ENCODE measurements at regions of chr3 and their contacts with region 1.

Region 1: GRCh38 chr3:151168269-151169094 is 34.5 kb downstream of the GPR171 start:
- DNase-seq: peak; percentile 92
- ATAC-seq: peak; percentile 65
- H3K4me3 Mint-ChIP-seq: no peak overlapping the region
- H3K27ac Mint-ChIP-seq: peak overlapping the region; percentile 27
- H3K4me1 Mint-ChIP-seq: peaks cover 43% of the 10 kb centered on the region
- H3K27me3 Mint-ChIP-seq: no peaks in the 10 kb centered on the region
- CTCF ChIP-seq: peak; percentile 85

Region 2: DNA sequence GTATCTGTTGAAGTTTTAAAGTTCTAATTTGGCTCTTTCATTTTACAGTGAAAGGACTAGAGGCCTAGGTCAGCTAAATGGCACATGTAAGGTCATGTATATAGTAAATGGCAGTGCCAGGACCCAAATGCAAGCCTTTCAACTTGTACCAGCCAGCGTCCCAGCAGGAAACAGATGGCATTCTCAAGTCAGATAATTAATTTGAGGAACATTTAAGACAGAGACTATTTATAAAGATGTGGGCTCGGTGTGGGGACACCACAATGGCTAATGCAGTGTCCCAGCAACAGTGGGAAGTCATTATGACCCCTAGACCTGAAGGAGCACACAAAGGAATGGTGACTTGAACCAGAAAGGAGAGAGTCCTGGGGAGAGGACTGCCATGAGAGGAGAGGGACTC is 269.3 kb before region 1 on chr3:
- CTCF ChIA-PET with region 1: no interaction called
- POLR2A ChIA-PET with region 1: no interaction called
- intact Hi-C with region 1: no loop called
- DNase-seq: no peak
- ATAC-seq: no peak
- H3K4me3 Mint-ChIP-seq: no peak overlapping the region
- H3K27ac Mint-ChIP-seq: no peak overlapping the region
- H3K4me1 Mint-ChIP-seq: no peaks in the 10 kb centered on the region
- H3K27me3 Mint-ChIP-seq: peaks cover 2% of the 10 kb centered on the region
- CTCF ChIP-seq: no peak

Region 3: GRCh38 chr3:151146071-151146730 is 22.3 kb before region 1 on chr3:
- CTCF ChIA-PET with region 1: interaction called, 10 read pairs
- POLR2A ChIA-PET with region 1: no interaction called
- intact Hi-C with region 1: no loop called
- DNase-seq: peak; percentile 71
- ATAC-seq: peak; percentile 98
- H3K4me3 Mint-ChIP-seq: no peak overlapping the region
- H3K27ac Mint-ChIP-seq: no peak overlapping the region
- H3K4me1 Mint-ChIP-seq: no peaks in the 10 kb centered on the region
- H3K27me3 Mint-ChIP-seq: peaks cover 3% of the 10 kb centered on the region
- CTCF ChIP-seq: peak; percentile 98

Region 4: DNA sequence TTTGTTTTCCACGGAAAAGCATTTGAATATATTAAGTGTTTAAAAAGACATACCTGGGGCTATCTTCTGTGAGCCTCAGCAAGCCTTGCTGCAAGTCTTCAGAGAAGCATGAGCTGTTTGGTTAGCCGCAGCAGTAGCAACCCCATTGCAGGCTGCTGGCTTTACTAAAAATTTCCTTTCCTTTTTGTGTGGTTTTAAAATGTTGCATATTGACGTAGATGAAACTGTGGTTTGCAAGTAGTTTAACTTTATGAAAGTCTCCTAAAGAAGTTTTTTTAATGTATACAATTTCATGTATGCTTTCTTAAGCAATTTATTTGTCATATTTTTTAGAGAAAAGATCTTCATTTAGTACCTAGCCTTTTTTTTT is 34.6 kb after region 1 on chr3 and contains the start of gene GPR171:
- CTCF ChIA-PET with region 1: interaction called, 33 read pairs
- POLR2A ChIA-PET with region 1: interaction called, 49 read pairs
- intact Hi-C with region 1: loop called (anchors 2 kb)
- DNase-seq: peak; percentile 82
- ATAC-seq: peak; percentile 64
- H3K4me3 Mint-ChIP-seq: peak within 1 kb of the TSS; percentile 87
- H3K27ac Mint-ChIP-seq: peak within 1 kb of the TSS; percentile 96
- H3K4me1 Mint-ChIP-seq: peaks cover 54% of the 10 kb centered on the region
- H3K27me3 Mint-ChIP-seq: no peaks in the 10 kb centered on the region
- CTCF ChIP-seq: no peak
- total RNA-seq, gene GPR171: 91.8 to 101 TPM

Region 5: GRCh38 chr3:151219056-151219455 is 50.6 kb after region 1 on chr3:
- CTCF ChIA-PET with region 1: interaction called, 143 read pairs
- POLR2A ChIA-PET with region 1: interaction called, 3 read pairs
- intact Hi-C with region 1: no loop called
- DNase-seq: no peak
- ATAC-seq: peak; percentile 78
- H3K4me3 Mint-ChIP-seq: no peak overlapping the region
- H3K27ac Mint-ChIP-seq: no peak overlapping the region
- H3K4me1 Mint-ChIP-seq: peaks cover 13% of the 10 kb centered on the region
- H3K27me3 Mint-ChIP-seq: no peaks in the 10 kb centered on the region
- CTCF ChIP-seq: no peak

Region 6: DNA sequence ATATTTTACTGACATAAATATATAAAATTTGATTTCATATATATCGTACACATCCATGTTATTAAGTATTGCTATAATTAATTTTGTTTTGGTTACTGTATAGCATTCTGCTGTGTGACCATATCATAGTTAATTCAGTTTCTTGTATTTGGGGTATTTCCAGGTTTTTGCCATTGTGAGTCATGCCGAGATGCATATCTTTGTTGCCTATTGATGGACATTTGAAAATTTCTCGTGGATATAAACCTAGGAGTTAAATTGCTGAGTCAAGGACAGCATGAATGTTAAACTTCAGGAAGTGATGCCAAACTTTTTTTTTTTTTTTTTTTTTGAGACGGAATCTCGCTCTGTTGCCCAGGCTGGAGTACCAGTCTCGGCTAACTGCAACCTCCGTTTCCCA is 68.3 kb after region 1 on chr3:
- CTCF ChIA-PET with region 1: interaction called, 28 read pairs
- POLR2A ChIA-PET with region 1: no interaction called
- intact Hi-C with region 1: no loop called
- DNase-seq: no peak
- ATAC-seq: no peak
- H3K4me3 Mint-ChIP-seq: no peak overlapping the region
- H3K27ac Mint-ChIP-seq: no peak overlapping the region
- H3K4me1 Mint-ChIP-seq: no peaks in the 10 kb centered on the region
- H3K27me3 Mint-ChIP-seq: no peaks in the 10 kb centered on the region
- CTCF ChIP-seq: no peak

Region 7: DNA sequence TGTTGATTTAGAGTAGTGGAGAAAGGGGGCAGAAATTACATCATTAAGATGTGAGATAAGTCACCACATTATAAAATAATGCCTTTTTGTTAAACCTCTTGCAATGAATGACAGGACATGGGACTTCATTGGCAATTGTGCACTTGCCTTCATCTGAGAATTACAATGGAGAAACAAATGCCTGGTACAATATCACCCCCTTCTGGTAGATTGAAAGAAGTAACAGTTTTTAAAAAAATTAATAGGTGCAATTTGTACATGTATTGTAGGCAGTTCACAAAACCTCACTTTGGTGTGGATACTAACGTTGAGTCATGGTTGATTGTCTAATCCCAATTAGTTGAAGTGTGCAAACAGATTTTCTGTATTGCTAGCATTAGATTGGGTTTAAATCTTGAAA is 114.4 kb after region 1 on chr3:
- CTCF ChIA-PET with region 1: interaction called, 165 read pairs
- POLR2A ChIA-PET with region 1: interaction called, 3 read pairs
- intact Hi-C with region 1: loop called (anchors 1 kb)
- DNase-seq: no peak
- ATAC-seq: peak; percentile 57
- H3K4me3 Mint-ChIP-seq: no peak overlapping the region
- H3K27ac Mint-ChIP-seq: no peak overlapping the region
- H3K4me1 Mint-ChIP-seq: peaks cover 39% of the 10 kb centered on the region
- H3K27me3 Mint-ChIP-seq: no peaks in the 10 kb centered on the region
- CTCF ChIP-seq: peak; percentile 82

Measured in activated CD8-positive, alpha-beta T cell treated with anti-CD3 and anti-CD28 coated beads for 36 hours (primary cell).